Calu3 (cell line): ENCODE measurements at regions of chr2 and their contacts with region 1.

Region 1: GRCh38 chr2:179285060-179285459 is 20.4 kb upstream of the SESTD1 start:
- DNase-seq: no peak
- H3K4me3 Mint-ChIP-seq: no peak overlapping the region
- H3K27ac Mint-ChIP-seq: no peak overlapping the region
- H3K4me1 Mint-ChIP-seq: no peaks in the 10 kb centered on the region
- H3K27me3 Mint-ChIP-seq: no peaks in the 10 kb centered on the region
- CTCF ChIP-seq: no peak

Region 2: GRCh38 chr2:179268299-179268801 is 16.7 kb before region 1 on chr2:
- CTCF ChIA-PET with region 1: no interaction called
- intact Hi-C with region 1: no loop called
- DNase-seq: peak; percentile 76
- H3K4me3 Mint-ChIP-seq: no peak overlapping the region
- H3K27ac Mint-ChIP-seq: peak overlapping the region; percentile 90
- H3K4me1 Mint-ChIP-seq: peaks cover 77% of the 10 kb centered on the region
- H3K27me3 Mint-ChIP-seq: no peaks in the 10 kb centered on the region
- CTCF ChIP-seq: no peak

Region 3: GRCh38 chr2:179332904-179333303 is 47.8 kb after region 1 on chr2:
- CTCF ChIA-PET with region 1: no interaction called
- intact Hi-C with region 1: loop called (anchors 5 kb)
- DNase-seq: no peak
- H3K4me3 Mint-ChIP-seq: no peak overlapping the region
- H3K27ac Mint-ChIP-seq: no peak overlapping the region
- H3K4me1 Mint-ChIP-seq: peaks cover 17% of the 10 kb centered on the region
- H3K27me3 Mint-ChIP-seq: no peaks in the 10 kb centered on the region
- CTCF ChIP-seq: no peak